ENCODE measurements at regions of chrX and their contacts with region 1.

Region 1: DNA sequence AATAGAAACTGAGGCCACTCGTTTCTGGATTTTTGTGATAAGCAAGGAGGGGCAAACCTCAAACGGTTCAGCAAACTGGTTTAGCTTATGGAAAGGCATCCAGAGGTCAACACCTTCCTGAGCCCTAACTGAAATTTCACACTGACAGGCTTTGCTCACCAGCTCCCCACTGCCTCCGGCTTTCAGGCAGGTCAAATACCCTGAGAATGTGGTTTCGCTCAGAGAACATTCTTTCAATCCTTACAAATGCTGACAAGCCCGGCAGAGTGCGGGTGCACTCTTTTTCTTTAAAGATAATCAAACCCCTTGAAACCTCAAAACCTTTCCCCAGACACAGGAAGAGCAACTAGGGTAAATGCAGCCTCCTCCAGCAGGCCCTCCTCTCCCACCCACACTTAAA is 41.5 kb downstream of the CD40LG start:
- DNase-seq: no peak
- H3K4me3 Mint-ChIP-seq: peak overlapping the region; percentile 23
- H3K27ac Mint-ChIP-seq: peak overlapping the region; percentile 84
- H3K4me1 Mint-ChIP-seq: peaks cover 58% of the 10 kb centered on the region
- H3K27me3 Mint-ChIP-seq: no peaks in the 10 kb centered on the region

Region 2: DNA sequence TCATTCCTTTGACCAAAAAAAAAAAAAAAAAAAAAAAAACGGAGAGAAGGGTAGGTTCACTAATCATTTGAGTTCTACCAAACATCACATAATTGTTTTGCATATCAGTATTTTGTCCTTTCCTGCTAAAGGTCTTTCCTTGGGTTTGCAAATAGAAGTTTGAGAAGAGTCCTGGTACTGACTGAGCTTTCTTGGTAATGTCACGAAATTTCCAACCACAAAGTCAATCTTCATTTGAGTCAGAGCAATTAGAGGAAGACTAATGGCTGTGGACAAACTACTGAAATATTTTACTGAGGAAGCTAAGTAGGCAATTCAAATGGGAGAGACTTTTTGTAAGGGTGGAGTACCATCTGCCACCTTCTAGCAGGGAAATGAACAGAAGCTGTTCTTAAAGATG is 63.2 kb before region 1 on chrX:
- intact Hi-C with region 1: loop called (anchors 2 kb)
- DNase-seq: no peak
- H3K4me3 Mint-ChIP-seq: peak overlapping the region; percentile 26
- H3K27ac Mint-ChIP-seq: peak overlapping the region; percentile 93
- H3K4me1 Mint-ChIP-seq: peaks cover 80% of the 10 kb centered on the region
- H3K27me3 Mint-ChIP-seq: no peaks in the 10 kb centered on the region

Region 3: GRCh38 chrX:136933611-136934145 is 244.2 kb after region 1 on chrX:
- intact Hi-C with region 1: no loop called
- DNase-seq: no peak
- H3K4me3 Mint-ChIP-seq: no peak overlapping the region
- H3K27ac Mint-ChIP-seq: no peak overlapping the region
- H3K4me1 Mint-ChIP-seq: peaks cover 17% of the 10 kb centered on the region
- H3K27me3 Mint-ChIP-seq: no peaks in the 10 kb centered on the region

Measured in activated T-helper 2 cell treated with anti-CD3 and anti-CD28 coated beads, Interferon-gamma antibody, Interleukin-2, Interleukin-4, amounts not matched to agents 10 μg/mL and 5 μg/mL and 100 μg/mL, durations not matched to agents 14 hours and 24 hours and 36 hours (primary cell).